Ascending aorta (tissue), 2 donors: ENCODE measurements at regions of chr2 and their contacts with region 1.

Region 1: DNA sequence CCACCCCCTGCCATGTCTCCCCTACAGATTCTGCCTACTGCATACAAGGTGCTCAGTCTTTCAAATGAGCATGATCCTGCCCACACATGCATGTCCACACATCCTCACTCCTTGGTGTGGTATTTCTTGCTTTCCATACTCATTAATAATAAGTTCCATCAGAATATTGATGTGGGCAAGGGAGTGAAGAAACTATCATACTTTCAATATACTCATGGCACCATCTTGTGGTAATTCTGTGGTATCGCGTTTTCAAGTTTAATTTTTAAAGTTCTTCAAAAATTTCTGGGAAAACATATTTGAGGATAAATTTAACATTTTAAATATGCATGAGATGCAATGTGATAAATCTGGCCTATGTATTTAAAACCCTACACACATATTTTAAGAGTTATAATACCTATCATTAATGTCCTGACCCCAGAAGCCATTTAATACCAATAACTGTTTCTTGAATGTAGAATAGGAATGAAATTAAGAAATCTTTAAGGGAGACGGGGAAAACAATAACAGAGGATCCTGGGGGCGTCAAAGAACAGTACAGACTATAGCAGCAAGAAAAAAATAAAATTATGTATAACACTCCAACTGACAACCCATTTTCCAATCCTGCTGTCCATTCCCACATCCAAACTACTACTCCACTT is 110.1 kb downstream of the ZNF385B start:
- DNase-seq: no peak
- H3K4me3 ChIP-seq: no peak overlapping the region
- H3K27ac ChIP-seq: no peak overlapping the region
- H3K4me1 ChIP-seq: no peaks in the 10 kb centered on the region
- H3K27me3 ChIP-seq: no peaks in the 10 kb centered on the region
- CTCF ChIP-seq: peak in 2 of 3 experiments; percentile 41 to 66

Region 2: DNA sequence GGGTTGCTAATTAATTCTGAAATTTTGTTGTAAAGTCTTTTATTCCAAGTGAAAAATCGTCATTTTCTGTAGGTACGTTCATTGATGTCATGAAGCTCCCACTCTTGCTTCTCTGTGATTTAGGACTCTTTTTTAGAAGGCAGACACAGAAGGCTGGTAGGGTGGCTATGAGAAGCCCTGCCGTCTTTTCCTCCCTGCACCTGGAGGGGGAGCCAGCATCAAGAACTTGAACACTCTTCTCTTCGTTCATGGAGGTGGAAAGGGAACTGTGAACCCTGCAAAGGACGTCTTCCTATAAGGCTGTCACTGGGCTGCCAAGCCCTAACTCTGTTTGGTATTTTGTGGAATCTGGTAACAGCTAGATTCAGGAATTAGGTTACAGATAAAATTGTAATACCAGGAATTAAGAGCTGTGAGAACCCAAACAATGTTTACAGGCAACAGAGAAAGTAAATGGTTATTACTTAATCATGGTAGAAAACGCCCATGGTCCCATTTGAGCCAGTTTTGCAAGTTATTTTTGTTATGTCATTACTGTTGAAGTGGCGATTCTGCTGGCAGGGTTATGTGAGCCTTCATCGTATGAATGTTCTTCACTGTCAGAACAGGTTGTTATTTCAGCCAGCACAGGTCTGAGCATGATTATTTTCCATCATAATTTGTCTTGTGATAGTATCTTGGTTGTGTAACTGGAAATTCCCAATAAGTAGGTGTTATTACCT is 1444.8 kb before region 1 on chr2:
- intact Hi-C with region 1: no loop called
- DNase-seq: no peak
- H3K4me3 ChIP-seq: no peak overlapping the region
- H3K27ac ChIP-seq: no peak overlapping the region
- H3K4me1 ChIP-seq: no peaks in the 10 kb centered on the region
- H3K27me3 ChIP-seq: no peaks in the 10 kb centered on the region
- CTCF ChIP-seq: peak in 2 of 3 experiments; percentile 10 to 33

Region 3: GRCh38 chr2:178761759-178762371 is 989.4 kb before region 1 on chr2:
- intact Hi-C with region 1: loop called (anchors 5 kb)
- DNase-seq: no peak
- H3K4me3 ChIP-seq: no peak overlapping the region
- H3K27ac ChIP-seq: no peak overlapping the region
- H3K4me1 ChIP-seq: no peaks in the 10 kb centered on the region
- H3K27me3 ChIP-seq: no peaks in the 10 kb centered on the region
- CTCF ChIP-seq: peak; percentile 39 to 70 (median 54)

Region 4: GRCh38 chr2:179422037-179422643 is 329.1 kb before region 1 on chr2:
- intact Hi-C with region 1: loop called (anchors 2 kb)
- DNase-seq: peak in 1 of 2 donors; percentile 81
- H3K4me3 ChIP-seq: no peak overlapping the region
- H3K27ac ChIP-seq: no peak overlapping the region
- H3K4me1 ChIP-seq: no peaks in the 10 kb centered on the region
- H3K27me3 ChIP-seq: no peaks in the 10 kb centered on the region
- CTCF ChIP-seq: peak; percentile 45 to 70 (median 66)

Region 5: DNA sequence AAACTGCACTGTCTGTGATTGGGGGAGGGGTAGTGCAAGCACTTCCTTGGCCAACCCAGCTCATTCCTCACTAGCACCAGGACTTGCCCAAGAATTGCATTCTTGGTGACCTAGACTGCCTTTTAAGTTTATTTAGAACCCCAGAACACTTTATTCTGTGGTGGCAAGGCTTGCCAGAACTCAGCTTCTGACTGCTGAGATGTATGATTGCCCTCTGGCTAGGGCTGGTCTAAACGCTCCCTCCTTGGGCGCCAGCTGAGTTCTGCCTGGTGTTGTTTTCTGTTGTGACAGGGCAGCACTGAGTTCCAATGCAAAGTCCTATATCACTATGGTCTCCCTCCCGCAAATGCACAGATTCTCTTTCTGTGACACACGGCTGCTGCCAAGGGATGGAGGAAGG is 137.6 kb before region 1 on chr2:
- intact Hi-C with region 1: no loop called
- DNase-seq: no peak
- H3K4me3 ChIP-seq: no peak overlapping the region
- H3K27ac ChIP-seq: no peak overlapping the region
- H3K4me1 ChIP-seq: no peaks in the 10 kb centered on the region
- H3K27me3 ChIP-seq: no peaks in the 10 kb centered on the region
- CTCF ChIP-seq: no peak

Region 6: DNA sequence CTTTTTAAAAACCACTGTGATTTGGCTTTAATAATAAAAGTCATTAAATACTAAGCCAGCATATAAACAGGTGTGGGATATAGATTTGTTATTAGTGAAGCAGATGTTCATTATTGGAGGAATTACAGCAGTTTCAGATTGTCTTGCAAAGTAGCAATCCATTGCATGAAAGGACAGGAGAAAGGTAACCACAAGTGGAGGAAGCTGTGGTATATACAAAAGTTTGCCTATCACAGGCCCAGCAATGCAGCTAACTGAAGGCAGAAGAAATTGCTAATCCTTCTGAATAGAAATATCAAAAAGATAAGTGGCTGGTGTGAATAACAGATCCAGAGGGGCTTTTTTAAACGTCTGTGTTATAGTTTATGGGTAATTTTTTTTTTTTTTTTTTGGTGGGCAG is 89.3 kb before region 1 on chr2:
- intact Hi-C with region 1: no loop called
- DNase-seq: no peak
- H3K4me3 ChIP-seq: no peak overlapping the region
- H3K27ac ChIP-seq: no peak overlapping the region
- H3K4me1 ChIP-seq: no peaks in the 10 kb centered on the region
- H3K27me3 ChIP-seq: no peaks in the 10 kb centered on the region
- CTCF ChIP-seq: no peak